ENCODE measurements at regions of chr10 and their contacts with region 1.

Region 1: GRCh38 chr10:88270871-88271713 is 312.0 kb downstream of the RNLS start:
- DNase-seq: peak; percentile 89
- H3K4me3 Mint-ChIP-seq: peak overlapping the region; percentile 37
- H3K27ac Mint-ChIP-seq: peak overlapping the region; percentile 84
- H3K4me1 Mint-ChIP-seq: peaks cover 46% of the 10 kb centered on the region
- H3K27me3 Mint-ChIP-seq: peaks cover 12% of the 10 kb centered on the region

Region 2: GRCh38 chr10:87861953-87862678 is 409.0 kb before region 1 on chr10:
- intact Hi-C with region 1: loop called (anchors 1 kb)
- DNase-seq: peak; percentile 98
- H3K4me3 Mint-ChIP-seq: peak overlapping the region; percentile 92
- H3K27ac Mint-ChIP-seq: peak overlapping the region; percentile 91
- H3K4me1 Mint-ChIP-seq: peaks cover 38% of the 10 kb centered on the region
- H3K27me3 Mint-ChIP-seq: no peaks in the 10 kb centered on the region

Region 3: GRCh38 chr10:88091490-88092105 is 179.5 kb before region 1 on chr10:
- intact Hi-C with region 1: loop called (anchors 1 kb)
- DNase-seq: peak; percentile 92
- H3K4me3 Mint-ChIP-seq: no peak overlapping the region
- H3K27ac Mint-ChIP-seq: peak overlapping the region; percentile 56
- H3K4me1 Mint-ChIP-seq: peaks cover 30% of the 10 kb centered on the region
- H3K27me3 Mint-ChIP-seq: peaks cover 46% of the 10 kb centered on the region

Region 4: GRCh38 chr10:88138319-88138848 is 132.7 kb before region 1 on chr10:
- intact Hi-C with region 1: loop called (anchors 1 kb)
- DNase-seq: peak; percentile 69
- H3K4me3 Mint-ChIP-seq: peak overlapping the region; percentile 36
- H3K27ac Mint-ChIP-seq: peak overlapping the region; percentile 38
- H3K4me1 Mint-ChIP-seq: peaks cover 13% of the 10 kb centered on the region
- H3K27me3 Mint-ChIP-seq: peaks cover 12% of the 10 kb centered on the region

Region 5: DNA sequence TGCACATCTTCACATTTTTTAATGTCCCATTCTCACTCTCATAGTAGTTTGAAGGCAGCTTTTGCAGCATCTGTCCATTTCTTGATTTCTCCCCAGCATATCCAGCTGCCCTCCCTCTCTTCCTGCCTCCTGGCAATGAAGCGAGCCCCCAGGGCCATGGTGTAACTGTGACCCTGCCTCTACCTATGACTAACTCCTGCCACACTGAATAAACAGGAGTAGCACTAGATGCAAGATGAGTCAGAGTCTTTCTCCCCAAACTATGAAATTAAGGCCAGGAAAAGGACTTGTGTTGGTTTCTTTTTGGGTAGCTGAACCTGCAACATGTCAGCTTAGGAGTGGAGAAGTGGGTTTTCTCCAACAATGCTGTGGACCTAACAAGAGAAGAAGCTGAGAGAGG is 17.0 kb before region 1 on chr10:
- intact Hi-C with region 1: loop called (anchors 2 kb)
- DNase-seq: peak; percentile 52
- H3K4me3 Mint-ChIP-seq: no peak overlapping the region
- H3K27ac Mint-ChIP-seq: peak overlapping the region; percentile 25
- H3K4me1 Mint-ChIP-seq: peaks cover 11% of the 10 kb centered on the region
- H3K27me3 Mint-ChIP-seq: peaks cover 4% of the 10 kb centered on the region

Region 6: GRCh38 chr10:88389456-88389855 is 118.4 kb after region 1 on chr10:
- intact Hi-C with region 1: loop called (anchors 2 kb)
- DNase-seq: peak; percentile 82
- H3K4me3 Mint-ChIP-seq: no peak overlapping the region
- H3K27ac Mint-ChIP-seq: no peak overlapping the region
- H3K4me1 Mint-ChIP-seq: peaks cover 31% of the 10 kb centered on the region
- H3K27me3 Mint-ChIP-seq: no peaks in the 10 kb centered on the region

Region 7: DNA sequence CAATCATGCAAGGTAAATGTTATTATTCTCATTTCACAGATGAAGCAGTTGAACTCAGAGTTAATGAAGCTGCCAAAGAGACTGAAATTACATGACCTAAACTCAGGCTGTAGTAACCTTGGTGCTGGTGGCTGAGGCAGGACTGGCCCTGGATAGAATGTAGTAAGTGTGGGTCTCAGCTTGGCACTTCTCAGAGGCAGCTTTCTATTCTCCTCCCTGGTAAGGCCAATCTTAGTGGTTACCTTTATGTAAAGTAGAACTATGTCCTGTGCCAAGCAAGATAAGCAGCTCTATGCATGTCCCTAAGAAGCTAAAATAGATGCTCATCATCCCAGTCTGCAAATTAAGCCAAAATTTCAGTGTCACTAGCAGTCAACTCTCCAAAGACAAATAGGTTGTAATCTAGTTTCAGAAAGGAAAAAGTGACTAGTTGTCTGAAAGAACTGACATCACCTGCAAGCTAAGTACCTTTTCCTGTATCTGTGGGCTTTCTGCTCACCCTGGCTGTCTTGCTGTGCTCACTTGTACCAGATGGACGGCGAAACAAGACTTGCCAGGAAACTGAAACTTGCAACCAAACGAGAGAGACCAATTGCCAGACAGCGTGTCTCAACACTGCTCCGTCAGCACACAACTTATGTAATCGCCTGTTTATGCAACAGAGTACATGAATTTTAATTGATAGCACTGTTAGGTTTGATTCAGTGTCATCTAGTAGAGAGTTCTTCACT is 892.3 kb after region 1 on chr10:
- intact Hi-C with region 1: loop called (anchors 5 kb)
- DNase-seq: peak; percentile 89
- H3K4me3 Mint-ChIP-seq: peak overlapping the region; percentile 70
- H3K27ac Mint-ChIP-seq: peak overlapping the region; percentile 25
- H3K4me1 Mint-ChIP-seq: peaks cover 34% of the 10 kb centered on the region
- H3K27me3 Mint-ChIP-seq: peaks cover 40% of the 10 kb centered on the region

Measured in activated CD4-positive, alpha-beta T cell treated with anti-CD3 and anti-CD28 coated beads, Interleukin-2, amount 10 ng/mL, durations not matched to agents 24 days and 14 days (primary cell).